A673 (cell line): ENCODE measurements at regions of chr22 and their contacts with region 1.

Region 1: DNA sequence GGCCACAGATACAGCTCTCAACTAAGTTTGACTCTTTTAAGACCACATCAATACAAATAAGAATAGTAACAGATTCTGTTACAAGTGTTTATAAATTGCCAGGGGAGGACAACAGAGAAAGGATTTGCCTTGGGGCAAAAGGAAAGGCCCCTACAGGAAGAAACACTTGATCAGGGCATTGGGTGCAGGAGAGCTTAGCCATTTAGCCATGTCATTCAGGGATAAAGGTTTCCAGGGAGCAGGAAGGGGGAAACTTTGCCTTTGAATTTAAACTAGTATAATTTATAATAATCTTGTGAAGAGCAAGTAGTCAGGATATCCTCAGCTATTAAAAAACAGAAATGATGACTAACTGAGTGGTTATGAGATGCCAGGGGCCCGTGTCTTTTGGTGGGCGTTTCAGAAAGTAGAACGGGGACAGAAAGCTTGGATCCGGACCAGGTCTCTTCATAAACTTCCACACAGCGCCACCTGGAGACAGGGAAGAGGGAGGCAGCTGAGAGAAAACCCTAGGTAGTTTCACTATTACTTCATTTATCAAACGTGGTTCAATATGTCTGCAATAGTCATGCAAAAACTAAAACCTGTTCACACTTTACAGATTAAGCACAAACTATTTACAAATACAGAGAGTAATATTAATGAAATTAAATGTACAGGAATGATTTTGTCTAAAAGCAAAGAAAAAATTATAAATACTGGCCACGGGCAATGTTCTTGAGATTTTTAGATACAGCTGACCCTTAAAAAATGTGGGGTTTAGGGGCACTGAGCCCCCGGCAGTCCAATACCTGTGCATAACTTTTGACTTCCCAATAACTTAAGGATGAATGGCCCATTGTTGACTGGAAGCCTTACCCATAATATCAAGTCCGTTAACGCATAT is 11.0 kb upstream of the SLC5A4 start:
- DNase-seq: peak; percentile 87
- H3K4me3 ChIP-seq: no peak overlapping the region
- H3K27ac ChIP-seq: no peak overlapping the region
- H3K4me1 ChIP-seq: no peaks in the 10 kb centered on the region
- H3K27me3 ChIP-seq: no peaks in the 10 kb centered on the region
- CTCF ChIP-seq: peak; percentile 92

Region 2: GRCh38 chr22:32050678-32051515 is 215.2 kb before region 1 on chr22:
- CTCF ChIA-PET with region 1: no interaction called
- POLR2A ChIA-PET with region 1: no interaction called
- intact Hi-C with region 1: no loop called
- DNase-seq: peak; percentile 77
- H3K4me3 ChIP-seq: no peak overlapping the region
- H3K27ac ChIP-seq: no peak overlapping the region
- H3K4me1 ChIP-seq: peaks cover 12% of the 10 kb centered on the region
- H3K27me3 ChIP-seq: no peaks in the 10 kb centered on the region
- CTCF ChIP-seq: no peak

Region 3: DNA sequence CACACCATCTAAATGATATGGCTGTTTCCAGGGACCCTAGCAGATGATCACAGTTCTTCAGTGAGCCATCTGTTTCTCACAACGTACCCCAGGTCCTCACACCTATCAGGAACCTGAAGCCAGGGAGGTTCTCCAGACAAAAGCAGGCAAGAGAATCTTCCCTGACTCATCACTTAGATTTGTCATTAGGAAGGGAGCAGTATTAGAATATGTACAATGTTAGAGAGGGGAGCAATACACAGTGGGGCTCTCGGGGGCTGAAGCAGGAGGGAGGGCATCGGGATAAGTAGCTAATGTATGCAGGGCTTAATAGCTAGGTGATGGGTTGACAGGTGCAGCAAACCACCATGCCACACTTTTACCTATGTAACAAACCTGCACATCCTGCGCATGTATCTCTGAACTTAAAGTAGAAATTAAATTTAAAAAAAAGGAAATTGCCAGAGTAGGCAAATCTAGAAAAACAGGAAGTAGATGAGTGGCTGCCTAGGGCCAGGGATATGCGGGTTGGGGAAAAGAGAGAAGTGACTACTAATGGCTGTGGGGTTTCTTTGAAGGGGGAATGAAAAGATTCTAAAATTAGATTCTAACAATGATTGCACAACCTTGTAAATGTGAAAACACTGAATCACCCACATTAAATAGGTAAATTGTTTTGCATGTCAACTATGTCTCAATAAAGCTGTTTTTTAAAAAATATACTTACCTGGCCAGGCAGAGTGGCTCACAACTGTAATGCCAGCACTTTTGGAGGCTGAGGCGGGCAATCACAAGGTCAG is 121.4 kb before region 1 on chr22:
- CTCF ChIA-PET with region 1: interaction called, 3 read pairs
- POLR2A ChIA-PET with region 1: no interaction called
- intact Hi-C with region 1: loop called (anchors 2 kb)
- DNase-seq: no peak
- H3K4me3 ChIP-seq: no peak overlapping the region
- H3K27ac ChIP-seq: no peak overlapping the region
- H3K4me1 ChIP-seq: no peaks in the 10 kb centered on the region
- H3K27me3 ChIP-seq: peaks cover 4% of the 10 kb centered on the region
- CTCF ChIP-seq: no peak